Ascending aorta (tissue), 2 donors: ENCODE measurements at regions of chr10 and their contacts with region 1.

Region 1: GRCh38 chr10:97292097-97292862 is at the start of gene ARHGAP19:
- DNase-seq: peak; percentile 92 to 98
- H3K4me3 ChIP-seq: peak within 1 kb of the TSS; percentile 51 to 76
- H3K27ac ChIP-seq: peak within 1 kb of the TSS; percentile 87 to 92
- H3K4me1 ChIP-seq: peaks cover 0 to 7% of the 10 kb centered on the region in 2 donors
- H3K27me3 ChIP-seq: no peaks in the 10 kb centered on the region
- CTCF ChIP-seq: peak in 1 of 3 experiments; percentile 44
- total RNA-seq, gene ARHGAP19: 4.5 TPM

Region 2: DNA sequence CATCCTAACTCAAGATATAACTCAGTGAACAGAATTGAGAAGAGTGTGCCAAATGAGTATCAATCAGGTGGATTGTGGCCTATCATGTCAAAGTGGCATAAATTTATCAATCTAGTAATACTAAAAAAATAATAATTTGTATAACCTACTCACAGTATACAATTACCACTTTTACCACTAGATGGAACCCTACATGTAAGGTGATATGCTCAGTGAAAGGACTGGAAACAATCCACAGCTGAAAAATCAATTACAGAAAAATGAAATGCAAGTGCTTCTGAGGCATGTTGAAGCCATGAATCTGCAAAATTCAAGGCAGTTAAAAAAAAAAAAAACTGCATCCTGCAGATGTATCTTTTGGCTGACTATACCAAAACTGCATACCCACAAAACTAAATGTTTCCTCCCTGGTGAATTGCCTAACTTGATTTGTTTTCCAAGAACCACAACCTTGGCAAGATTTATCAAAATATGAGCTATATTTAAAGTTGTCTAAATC is 13.7 kb before region 1 on chr10:
- intact Hi-C with region 1: loop called (anchors 2 kb)
- DNase-seq: no peak
- H3K4me3 ChIP-seq: no peak overlapping the region
- H3K27ac ChIP-seq: peak overlapping the region; percentile 40 to 66
- H3K4me1 ChIP-seq: peaks cover 9 to 16% of the 10 kb centered on the region in 2 donors
- H3K27me3 ChIP-seq: no peaks in the 10 kb centered on the region
- CTCF ChIP-seq: peak; percentile 53 to 67 (median 56)

Region 3: GRCh38 chr10:97318772-97319651 is 26.7 kb after region 1 on chr10 and contains the start of gene FRAT1:
- intact Hi-C with region 1: loop called (anchors 1 kb)
- DNase-seq: peak; percentile 44 to 93
- H3K4me3 ChIP-seq: peak within 1 kb of the TSS; percentile 85 to 95
- H3K27ac ChIP-seq: peak within 1 kb of the TSS; percentile 91 to 94
- H3K4me1 ChIP-seq: peaks cover 4 to 8% of the 10 kb centered on the region in 2 donors
- H3K27me3 ChIP-seq: no peaks in the 10 kb centered on the region
- CTCF ChIP-seq: peak in 1 of 3 experiments; percentile 26
- total RNA-seq, gene FRAT1: 5.2 TPM

Region 4: GRCh38 chr10:97334370-97335175 is 42.3 kb after region 1 on chr10 and contains the start of gene FRAT2:
- intact Hi-C with region 1: loop called (anchors 1 kb)
- DNase-seq: peak; percentile 61 to 94
- H3K4me3 ChIP-seq: peak within 1 kb of the TSS; percentile 73 to 98
- H3K27ac ChIP-seq: peak within 1 kb of the TSS; percentile 87 to 96
- H3K4me1 ChIP-seq: peaks cover 6 to 39% of the 10 kb centered on the region in 2 donors
- H3K27me3 ChIP-seq: no peaks in the 10 kb centered on the region
- CTCF ChIP-seq: no peak
- total RNA-seq, gene FRAT2: 32.0 TPM

Region 5: DNA sequence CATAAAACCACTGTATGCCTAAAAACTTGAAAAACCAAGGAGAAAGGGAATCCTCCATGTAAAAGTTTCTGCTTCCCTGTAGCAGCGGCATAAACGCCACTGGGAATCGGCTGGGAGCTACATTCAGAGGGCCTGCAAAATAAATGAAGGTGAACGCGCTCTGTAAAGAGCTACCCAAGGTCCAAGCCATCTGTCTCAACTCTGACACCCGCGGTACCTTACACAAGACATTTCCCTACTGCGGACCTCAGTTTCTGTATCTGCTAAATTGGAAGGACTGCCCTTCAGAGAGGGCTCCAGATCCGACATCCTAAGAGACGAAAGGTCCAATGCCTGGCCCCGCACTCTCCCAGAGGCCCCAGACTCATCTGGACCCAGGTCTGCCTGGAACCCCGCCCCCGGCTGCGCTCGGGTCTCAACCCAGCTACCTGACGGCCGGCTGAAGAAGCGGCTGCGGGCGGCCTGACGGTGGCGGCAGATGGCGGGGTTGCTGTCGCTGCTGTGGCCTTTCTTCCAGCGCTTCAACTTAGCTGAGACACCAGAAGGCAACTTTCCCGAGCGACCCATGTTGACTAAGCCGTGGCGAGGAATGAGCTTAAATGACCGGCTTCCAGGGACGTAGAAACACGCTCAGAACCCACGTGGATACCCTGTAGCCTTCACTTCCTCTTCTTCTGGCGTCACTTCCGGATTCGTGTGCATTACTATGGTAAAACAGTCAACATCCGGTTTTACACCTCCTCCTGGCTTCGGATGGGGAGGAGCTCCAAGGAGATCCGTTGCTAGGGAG is 108.6 kb after region 1 on chr10 and contains the start of gene RRP12:
- intact Hi-C with region 1: loop called (anchors 2 kb)
- DNase-seq: peak; percentile 72 to 96
- H3K4me3 ChIP-seq: peak within 1 kb of the TSS; percentile 74 to 85
- H3K27ac ChIP-seq: peak within 1 kb of the TSS; percentile 79
- H3K4me1 ChIP-seq: peaks cover 7 to 9% of the 10 kb centered on the region in 2 donors
- H3K27me3 ChIP-seq: no peaks in the 10 kb centered on the region
- CTCF ChIP-seq: peak in 1 of 3 experiments; percentile 9
- total RNA-seq, gene RRP12: 5.9 TPM

Region 6: DNA sequence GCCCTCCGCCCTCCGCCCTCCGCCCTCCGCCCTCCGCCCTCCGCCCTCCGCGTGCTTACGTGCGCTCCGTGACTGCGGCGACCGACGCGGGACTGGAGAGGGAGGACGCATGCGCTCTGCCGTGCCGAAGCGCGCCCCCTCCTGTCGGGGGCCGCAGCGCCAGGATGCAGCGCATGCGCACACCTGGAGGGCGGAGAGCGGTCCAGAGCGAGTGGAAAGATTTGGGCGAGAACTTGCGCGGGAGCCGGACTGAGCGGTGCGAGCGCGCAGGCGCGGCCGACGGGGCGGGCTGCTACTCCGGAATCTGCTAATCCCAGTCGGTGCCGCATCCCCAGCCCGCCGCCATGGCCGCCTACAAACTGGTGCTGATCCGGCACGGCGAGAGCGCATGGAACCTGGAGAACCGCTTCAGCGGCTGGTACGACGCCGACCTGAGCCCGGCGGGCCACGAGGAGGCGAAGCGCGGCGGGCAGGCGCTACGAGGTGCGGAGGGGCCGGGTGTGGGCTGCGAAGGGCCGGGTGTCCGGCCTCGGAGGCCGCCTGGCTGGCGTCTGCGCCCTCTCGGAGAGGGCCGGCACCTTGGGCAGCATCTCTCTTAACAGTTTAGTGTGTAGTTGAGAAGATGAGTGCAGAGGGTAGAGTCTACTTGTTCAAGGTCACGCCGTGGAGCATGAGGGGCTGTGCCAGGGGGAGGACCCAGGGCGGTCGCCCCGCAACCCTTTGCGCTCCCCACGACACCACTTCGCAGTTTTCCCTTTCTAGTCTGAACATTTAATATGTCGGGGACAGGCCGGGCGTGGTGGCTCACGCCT is 133.9 kb after region 1 on chr10 and contains the start of gene PGAM1:
- intact Hi-C with region 1: loop called (anchors 2 kb)
- DNase-seq: peak; percentile 85 to 97
- H3K4me3 ChIP-seq: peak within 1 kb of the TSS; percentile 75 to 97
- H3K27ac ChIP-seq: peak within 1 kb of the TSS; percentile 86 to 89
- H3K4me1 ChIP-seq: peaks cover 9 to 17% of the 10 kb centered on the region in 2 donors
- H3K27me3 ChIP-seq: no peaks in the 10 kb centered on the region
- CTCF ChIP-seq: peak; percentile 60 to 72 (median 69)
- total RNA-seq, gene PGAM1: 171 TPM

Region 7: GRCh38 chr10:97534746-97535367 is 242.6 kb after region 1 on chr10:
- intact Hi-C with region 1: no loop called
- DNase-seq: no peak
- H3K4me3 ChIP-seq: no peak overlapping the region
- H3K27ac ChIP-seq: no peak overlapping the region
- H3K4me1 ChIP-seq: peaks cover 4 to 10% of the 10 kb centered on the region in 2 donors
- H3K27me3 ChIP-seq: no peaks in the 10 kb centered on the region
- CTCF ChIP-seq: peak in 2 of 3 experiments; percentile 37 to 48

Region 8: GRCh38 chr10:98134431-98135221 is 842.3 kb after region 1 on chr10 and contains the start of gene R3HCC1L:
- intact Hi-C with region 1: loop called (anchors 5 kb)
- DNase-seq: peak; percentile 60 to 95
- H3K4me3 ChIP-seq: peak within 1 kb of the TSS; percentile 69 to 92
- H3K27ac ChIP-seq: peak within 1 kb of the TSS; percentile 81 to 86
- H3K4me1 ChIP-seq: peaks cover 0 to 6% of the 10 kb centered on the region in 2 donors
- H3K27me3 ChIP-seq: no peaks in the 10 kb centered on the region
- CTCF ChIP-seq: peak in 1 of 3 experiments; percentile 4
- total RNA-seq, gene R3HCC1L: 3.1 TPM